BJ (cell line): ENCODE measurements at regions of chr3 and their contacts with region 1.

Region 1: DNA sequence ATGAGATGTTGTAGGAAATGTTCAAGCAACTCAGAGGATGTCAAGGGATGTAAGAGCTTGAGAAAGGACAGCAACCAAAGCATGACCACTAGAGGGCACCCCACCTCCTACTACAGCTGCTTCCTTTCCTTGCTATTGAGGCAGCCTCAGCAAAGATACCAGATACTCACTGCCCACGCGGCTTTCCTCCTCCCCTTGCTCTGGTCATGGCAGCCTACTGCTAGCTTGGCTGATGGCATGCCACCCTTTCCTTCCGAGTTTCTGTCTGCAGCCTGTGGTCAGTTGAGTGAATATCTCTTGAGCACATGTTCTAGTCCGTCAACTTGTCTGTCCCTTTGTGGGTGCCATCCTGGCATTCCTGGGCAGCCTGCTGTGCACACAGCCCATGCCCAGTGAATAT is 4.4 kb upstream of the CXCR6 start:
- DNase-seq: no peak
- H3K4me3 ChIP-seq: no peak overlapping the region
- H3K27me3 ChIP-seq: no peaks in the 10 kb centered on the region
- CTCF ChIP-seq: peak; percentile 89

Region 2: GRCh38 chr3:46065294-46065721 is 126.4 kb after region 1 on chr3:
- CTCF ChIA-PET with region 1: interaction called, 27 read pairs
- POLR2A ChIA-PET with region 1: interaction called, 3 read pairs
- DNase-seq: no peak
- H3K4me3 ChIP-seq: no peak overlapping the region
- H3K27me3 ChIP-seq: peaks cover 14% of the 10 kb centered on the region
- CTCF ChIP-seq: no peak